Common myeloid progenitor, CD34-positive (primary cell): ENCODE measurements at regions of chr6 and their contacts with region 1.

Region 1: DNA sequence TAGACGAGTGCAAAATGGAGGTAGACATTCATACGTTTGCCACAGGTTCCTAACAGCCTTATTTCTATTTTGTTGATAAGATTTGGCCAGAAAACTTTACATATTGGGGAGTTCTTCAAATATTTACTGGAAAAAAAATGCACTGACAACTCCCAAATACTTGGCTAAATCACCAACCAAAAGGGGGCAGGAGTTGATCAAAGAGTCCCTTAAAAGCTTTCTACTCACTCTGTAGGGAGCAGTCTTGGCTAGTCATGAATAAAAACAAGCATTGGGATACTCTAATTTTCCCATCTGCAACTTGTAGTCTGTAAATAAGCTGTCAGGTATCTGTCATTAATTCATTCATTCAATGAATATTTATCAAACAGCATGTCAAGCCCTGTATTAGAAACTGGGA is 18.4 kb downstream of the TENT5A start:
- DNase-seq: peak in 2 of 3 donors; percentile 34 to 47
- H3K4me3 ChIP-seq: no peak overlapping the region
- H3K27ac ChIP-seq: no peak overlapping the region
- H3K4me1 ChIP-seq: peaks cover 0 to 3% (median 0%) of the 10 kb centered on the region in 4 experiments
- H3K27me3 ChIP-seq: no peaks in the 10 kb centered on the region

Region 2: GRCh38 chr6:81747327-81747726 is 13.2 kb after region 1 on chr6:
- CTCF ChIA-PET with region 1: interaction called, 13 read pairs
- POLR2A ChIA-PET with region 1: interaction called, 3 read pairs
- DNase-seq: no peak
- H3K4me3 ChIP-seq: no peak overlapping the region
- H3K27ac ChIP-seq: no peak overlapping the region
- H3K4me1 ChIP-seq: peaks cover 29 to 67% (median 48%) of the 10 kb centered on the region in 4 experiments
- H3K27me3 ChIP-seq: no peaks in the 10 kb centered on the region